Activated CD8-positive, alpha-beta T cell treated with anti-CD3 and anti-CD28 coated beads for 36 hours (primary cell): ENCODE measurements at regions of chr20 and their contacts with region 1.

Region 1: GRCh38 chr20:45095753-45096371 is 5.1 kb downstream of the KCNS1 start:
- DNase-seq: peak; percentile 79
- ATAC-seq: peak; percentile 63
- H3K4me3 Mint-ChIP-seq: no peak overlapping the region
- H3K27ac Mint-ChIP-seq: no peak overlapping the region
- H3K4me1 Mint-ChIP-seq: peaks cover 13% of the 10 kb centered on the region
- H3K27me3 Mint-ChIP-seq: peaks cover 32% of the 10 kb centered on the region
- CTCF ChIP-seq: peak; percentile 82

Region 2: DNA sequence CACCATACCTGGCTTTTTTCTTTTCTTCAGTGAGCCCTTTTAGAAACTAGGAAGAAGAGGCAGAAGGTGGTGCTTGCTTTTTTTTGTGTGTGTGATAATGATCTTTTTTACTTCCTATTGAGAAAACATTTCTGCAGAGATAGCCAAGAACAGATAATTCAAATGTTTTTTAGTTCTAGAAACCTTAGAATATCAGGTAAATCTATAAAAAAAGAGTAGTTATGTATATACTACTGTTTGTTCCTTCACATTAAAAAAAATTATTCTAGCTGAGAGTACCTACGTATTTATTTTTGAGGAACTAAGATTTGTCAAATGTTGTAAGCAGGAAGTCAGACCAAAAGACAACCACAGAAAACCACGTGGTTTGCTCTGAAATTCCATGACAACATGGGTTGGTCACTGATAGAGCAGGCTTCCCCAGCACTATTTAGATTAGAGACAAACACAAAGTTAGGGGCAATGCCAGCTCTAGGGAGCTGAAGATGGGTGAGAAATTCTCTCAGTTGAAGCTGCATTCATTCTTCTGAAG is 116.7 kb before region 1 on chr20:
- CTCF ChIA-PET with region 1: interaction called, 10 read pairs
- POLR2A ChIA-PET with region 1: no interaction called
- intact Hi-C with region 1: no loop called
- DNase-seq: peak; percentile 86
- ATAC-seq: peak; percentile 82
- H3K4me3 Mint-ChIP-seq: peak overlapping the region; percentile 50
- H3K27ac Mint-ChIP-seq: peak overlapping the region; percentile 96
- H3K4me1 Mint-ChIP-seq: peaks cover 83% of the 10 kb centered on the region
- H3K27me3 Mint-ChIP-seq: no peaks in the 10 kb centered on the region
- CTCF ChIP-seq: no peak

Region 3: DNA sequence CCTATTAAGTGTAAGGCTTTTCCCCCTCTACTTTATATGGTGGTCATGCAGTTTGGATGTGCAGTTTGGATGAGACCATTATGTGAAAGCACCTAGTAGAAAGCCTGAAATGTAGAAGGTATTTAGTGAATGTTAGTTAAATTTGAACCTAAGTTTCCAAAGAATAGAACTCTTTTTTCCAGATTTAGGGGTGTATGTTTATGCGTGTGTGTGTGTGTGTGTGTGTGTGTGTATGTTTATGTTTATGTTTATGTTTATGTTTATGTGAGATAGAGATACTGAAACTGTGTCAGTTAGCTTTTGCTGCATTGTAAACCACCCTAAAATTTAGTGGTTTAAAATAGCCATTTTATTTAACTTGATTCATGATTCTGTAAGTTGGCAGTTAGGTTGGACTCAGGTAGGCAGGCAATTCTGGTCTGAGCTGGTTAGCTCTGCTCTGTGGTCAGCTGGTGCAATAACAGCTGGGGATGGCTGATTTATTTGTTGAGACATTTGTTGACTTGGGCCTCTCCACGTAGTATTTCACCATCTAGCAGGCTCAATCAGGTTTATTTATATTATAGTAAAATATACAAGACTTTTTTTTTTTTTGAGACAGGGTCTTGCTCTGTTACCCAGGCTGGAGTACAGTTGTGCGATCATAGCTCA is 75.5 kb before region 1 on chr20:
- CTCF ChIA-PET with region 1: interaction called, 53 read pairs
- POLR2A ChIA-PET with region 1: no interaction called
- intact Hi-C with region 1: no loop called
- DNase-seq: no peak
- ATAC-seq: no peak
- H3K4me3 Mint-ChIP-seq: no peak overlapping the region
- H3K27ac Mint-ChIP-seq: peak overlapping the region; percentile 54
- H3K4me1 Mint-ChIP-seq: peaks cover 60% of the 10 kb centered on the region
- H3K27me3 Mint-ChIP-seq: no peaks in the 10 kb centered on the region
- CTCF ChIP-seq: no peak

Region 4: DNA sequence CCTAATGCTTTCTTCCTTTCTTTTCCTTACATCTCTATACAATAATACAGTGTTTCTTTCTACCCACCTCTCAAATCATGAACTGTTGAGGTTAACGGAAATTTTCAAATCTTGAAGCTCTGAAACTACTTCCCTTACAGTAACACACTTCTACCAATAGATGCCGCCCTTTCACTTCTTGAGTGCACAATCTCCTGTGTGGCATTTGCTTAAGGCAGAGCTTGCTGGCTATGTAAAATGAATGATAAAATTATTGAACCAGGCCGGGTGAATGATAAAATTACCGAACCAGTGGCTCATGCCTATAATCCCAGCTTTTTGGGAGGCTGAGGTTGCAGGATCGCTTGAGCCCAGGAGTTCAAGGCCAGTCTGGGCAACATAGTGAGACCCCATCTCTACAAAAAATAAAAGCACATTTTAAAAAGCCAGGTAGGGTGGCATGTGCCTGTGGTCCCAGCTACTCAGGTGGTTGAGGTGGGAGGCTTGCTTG is 51.7 kb before region 1 on chr20:
- CTCF ChIA-PET with region 1: interaction called, 137 read pairs
- POLR2A ChIA-PET with region 1: interaction called, 5 read pairs
- intact Hi-C with region 1: loop called (anchors 5 kb)
- DNase-seq: peak; percentile 56
- ATAC-seq: peak; percentile 88
- H3K4me3 Mint-ChIP-seq: no peak overlapping the region
- H3K27ac Mint-ChIP-seq: peak overlapping the region; percentile 97
- H3K4me1 Mint-ChIP-seq: peaks cover 77% of the 10 kb centered on the region
- H3K27me3 Mint-ChIP-seq: no peaks in the 10 kb centered on the region
- CTCF ChIP-seq: peak; percentile 88

Region 5: DNA sequence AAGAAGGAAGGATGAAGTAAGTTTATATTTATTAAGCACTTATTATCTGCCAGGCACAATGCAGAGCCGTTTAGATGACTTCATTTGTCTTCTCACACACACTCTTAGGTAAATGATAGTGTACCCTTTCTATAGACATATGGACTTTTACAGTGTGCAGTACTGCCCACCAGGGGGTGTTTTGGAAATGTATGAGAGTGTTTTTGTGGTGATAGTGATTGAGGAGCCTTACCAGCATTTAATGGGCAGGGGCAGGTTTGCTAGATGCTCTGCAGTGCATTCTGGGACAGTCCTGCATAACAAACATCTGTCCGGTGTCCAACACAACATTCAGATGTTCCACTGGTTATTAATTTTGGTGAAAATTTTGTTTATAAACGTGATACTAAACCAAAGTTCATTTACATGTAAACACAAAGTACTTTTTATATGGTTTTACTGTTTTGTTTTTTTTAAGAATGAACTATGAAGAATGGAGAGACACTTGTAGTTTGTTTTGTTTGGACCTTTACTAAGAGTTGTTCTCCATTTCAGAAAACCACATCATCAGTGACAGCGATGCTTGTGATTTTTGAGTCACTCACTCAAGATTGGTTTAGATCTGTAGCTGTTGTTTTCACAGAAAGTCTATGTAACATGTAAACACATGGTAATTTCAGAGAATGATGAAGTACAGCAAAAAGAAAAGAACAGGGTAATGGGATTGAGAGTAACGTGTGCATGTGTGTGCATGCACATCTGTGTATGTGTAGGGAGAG is 14.8 kb before region 1 on chr20:
- CTCF ChIA-PET with region 1: interaction called, 34 read pairs
- POLR2A ChIA-PET with region 1: interaction called, 4 read pairs
- intact Hi-C with region 1: no loop called
- DNase-seq: no peak
- ATAC-seq: peak; percentile 45
- H3K4me3 Mint-ChIP-seq: no peak overlapping the region
- H3K27ac Mint-ChIP-seq: peak overlapping the region; percentile 14
- H3K4me1 Mint-ChIP-seq: peaks cover 4% of the 10 kb centered on the region
- H3K27me3 Mint-ChIP-seq: no peaks in the 10 kb centered on the region
- CTCF ChIP-seq: peak; percentile 36

Region 6: GRCh38 chr20:45293041-45294002 is 197.5 kb after region 1 on chr20:
- CTCF ChIA-PET with region 1: interaction called, 91 read pairs
- POLR2A ChIA-PET with region 1: interaction called, 3 read pairs
- intact Hi-C with region 1: no loop called
- DNase-seq: peak; percentile 91
- ATAC-seq: peak; percentile 92
- H3K4me3 Mint-ChIP-seq: peak overlapping the region; percentile 69
- H3K27ac Mint-ChIP-seq: no peak overlapping the region
- H3K4me1 Mint-ChIP-seq: peaks cover 2% of the 10 kb centered on the region
- H3K27me3 Mint-ChIP-seq: peaks cover 31% of the 10 kb centered on the region
- CTCF ChIP-seq: peak; percentile 98